PC-9 (cell line): ENCODE measurements at regions of chr20 and their contacts with region 1.

Region 1: GRCh38 chr20:58209652-58210397 is 18.6 kb downstream of the ANKRD60 start:
- DNase-seq: peak; percentile 53 to 85
- H3K4me3 ChIP-seq: no peak overlapping the region
- H3K27ac ChIP-seq: peak overlapping the region; percentile 8
- H3K4me1 ChIP-seq: no peaks in the 10 kb centered on the region
- H3K27me3 ChIP-seq: no peaks in the 10 kb centered on the region
- CTCF ChIP-seq: peak; percentile 100

Region 2: GRCh38 chr20:57383447-57384347 is 826.1 kb before region 1 on chr20:
- CTCF ChIA-PET with region 1: no interaction called
- POLR2A ChIA-PET with region 1: no interaction called
- intact Hi-C with region 1: loop called (anchors 5 kb)
- DNase-seq: no peak
- H3K4me3 ChIP-seq: no peak overlapping the region
- H3K27ac ChIP-seq: no peak overlapping the region
- H3K4me1 ChIP-seq: no peaks in the 10 kb centered on the region
- H3K27me3 ChIP-seq: no peaks in the 10 kb centered on the region
- CTCF ChIP-seq: no peak

Region 3: GRCh38 chr20:57596998-57597939 is 612.6 kb before region 1 on chr20:
- CTCF ChIA-PET with region 1: interaction called, 8 read pairs
- POLR2A ChIA-PET with region 1: no interaction called
- intact Hi-C with region 1: loop called (anchors 1 kb)
- DNase-seq: peak in 1 of 2 experiments; percentile 73
- H3K4me3 ChIP-seq: peak overlapping the region; percentile 43; the same call in 1 of the 2 replicates
- H3K27ac ChIP-seq: no peak overlapping the region
- H3K4me1 ChIP-seq: peaks cover 4% of the 10 kb centered on the region; the same call in 1 of the 2 replicates
- H3K27me3 ChIP-seq: peaks cover 6% of the 10 kb centered on the region; the same call in 1 of the 2 replicates
- CTCF ChIP-seq: peak; percentile 97

Region 4: DNA sequence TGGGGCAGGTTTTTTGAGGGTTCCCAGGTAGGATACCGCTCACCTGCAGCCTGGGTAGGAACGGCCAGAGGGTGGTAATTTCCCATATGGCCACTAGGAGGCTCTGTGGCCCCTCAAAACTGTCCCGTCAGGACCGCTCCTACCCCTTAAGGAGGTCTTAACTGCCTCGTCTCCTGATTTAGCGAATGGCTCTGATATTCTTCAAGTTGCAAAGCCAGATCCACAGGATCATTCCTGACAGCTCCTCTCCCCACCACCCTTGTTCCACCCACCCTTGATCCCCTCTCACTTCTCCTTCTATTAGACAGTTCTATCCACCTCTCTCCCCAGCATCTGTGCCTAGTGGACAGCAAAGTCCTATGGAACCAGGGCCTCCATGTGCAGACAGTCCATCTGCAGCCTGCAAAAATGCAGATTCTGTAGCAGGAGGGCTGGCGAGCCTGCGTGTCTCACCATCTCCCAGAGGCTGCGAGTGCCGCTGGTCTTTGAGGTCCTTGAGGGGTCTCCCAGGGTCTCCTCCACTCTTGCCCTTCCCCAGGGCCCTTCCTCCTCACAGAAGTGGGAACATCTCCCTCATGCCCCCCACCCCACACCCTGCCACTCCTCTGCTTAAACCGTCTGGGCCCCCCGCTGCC is 555.3 kb before region 1 on chr20:
- CTCF ChIA-PET with region 1: no interaction called
- POLR2A ChIA-PET with region 1: no interaction called
- intact Hi-C with region 1: loop called (anchors 1 kb)
- DNase-seq: peak in 1 of 2 experiments; percentile 67
- H3K4me3 ChIP-seq: no peak overlapping the region
- H3K27ac ChIP-seq: no peak overlapping the region
- H3K4me1 ChIP-seq: no peaks in the 10 kb centered on the region
- H3K27me3 ChIP-seq: no peaks in the 10 kb centered on the region
- CTCF ChIP-seq: peak; percentile 98